HAP-1 (cell line): ENCODE measurements at regions of chr2 and their contacts with region 1.

Region 1: GRCh38 chr2:135709992-135710391 is 31.7 kb upstream of the UBXN4 start:
- DNase-seq: peak; percentile 24 to 79
- H3K4me3 ChIP-seq: no peak overlapping the region
- H3K4me1 ChIP-seq: no peaks in the 10 kb centered on the region
- H3K27me3 ChIP-seq: no peaks in the 10 kb centered on the region

Region 2: GRCh38 chr2:134999521-134999920 is 710.5 kb before region 1 on chr2:
- in situ Hi-C with region 1: loop called (anchors 10 kb)
- DNase-seq: no peak
- H3K4me3 ChIP-seq: no peak overlapping the region
- H3K4me1 ChIP-seq: no peaks in the 10 kb centered on the region
- H3K27me3 ChIP-seq: no peaks in the 10 kb centered on the region

Region 3: GRCh38 chr2:135473567-135473966 is 236.4 kb before region 1 on chr2:
- in situ Hi-C with region 1: loop called (anchors 10 kb)
- DNase-seq: peak; percentile 58 to 64
- H3K4me3 ChIP-seq: no peak overlapping the region
- H3K4me1 ChIP-seq: no peaks in the 10 kb centered on the region
- H3K27me3 ChIP-seq: no peaks in the 10 kb centered on the region